ENCODE measurements at regions of chr7 and their contacts with region 1.

Region 1: GRCh38 chr7:85829817-85830432 is 643.1 kb upstream of the SEMA3D start:
- H3K4me3 ChIP-seq: no peak overlapping the region
- H3K27ac ChIP-seq: no peak overlapping the region
- H3K4me1 ChIP-seq: no peaks in the 10 kb centered on the region
- CTCF ChIP-seq: no peak

Region 2: GRCh38 chr7:85030893-85031292 is 799.0 kb before region 1 on chr7:
- CTCF ChIA-PET with region 1: interaction called, 31 read pairs
- POLR2A ChIA-PET with region 1: no interaction called
- H3K4me3 ChIP-seq: no peak overlapping the region
- H3K27ac ChIP-seq: no peak overlapping the region
- H3K4me1 ChIP-seq: peaks cover 21% of the 10 kb centered on the region
- CTCF ChIP-seq: no peak

Region 3: DNA sequence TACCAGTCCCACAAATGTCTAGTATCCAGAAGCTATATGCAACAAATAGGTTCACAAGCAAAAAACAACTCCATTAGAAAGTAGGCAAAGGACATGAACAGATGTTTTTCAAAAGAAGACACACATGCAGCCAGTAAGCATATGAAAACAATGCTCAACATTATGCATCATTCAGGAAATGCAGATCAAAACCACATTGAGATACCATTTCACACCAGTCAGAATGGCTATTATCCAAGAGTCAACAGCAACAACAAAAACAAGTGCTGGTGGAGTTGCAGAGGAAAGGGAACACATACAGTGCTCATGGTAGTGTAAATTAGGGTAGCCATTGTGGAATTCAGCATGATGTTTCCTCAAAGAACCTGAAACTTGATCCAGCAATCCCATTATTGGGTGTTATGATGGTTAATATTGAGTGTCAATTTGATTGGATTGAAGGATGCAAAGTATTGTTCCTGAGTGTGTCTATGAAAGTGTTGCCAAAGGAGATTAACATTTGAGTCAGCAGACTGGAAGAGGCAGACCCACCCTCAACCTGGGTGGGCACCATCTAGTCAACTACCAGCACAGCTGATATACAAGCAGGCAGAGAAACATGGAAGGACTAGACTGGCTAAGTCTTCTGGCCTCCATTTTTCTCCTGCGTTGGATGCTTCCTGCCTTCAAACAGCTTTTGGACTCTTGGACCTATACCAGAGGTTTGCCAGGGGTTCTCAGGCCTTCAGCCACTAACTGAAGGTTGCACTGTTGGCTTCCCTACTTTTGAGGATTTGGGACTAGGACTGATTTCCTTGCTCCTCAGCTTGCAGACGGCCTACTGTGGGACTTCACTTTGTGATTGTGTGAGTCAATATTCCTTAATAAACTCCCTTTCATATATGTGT is 424.7 kb before region 1 on chr7:
- CTCF ChIA-PET with region 1: no interaction called
- POLR2A ChIA-PET with region 1: no interaction called
- H3K4me3 ChIP-seq: no peak overlapping the region
- H3K27ac ChIP-seq: no peak overlapping the region
- H3K4me1 ChIP-seq: no peaks in the 10 kb centered on the region
- CTCF ChIP-seq: no peak

Region 4: DNA sequence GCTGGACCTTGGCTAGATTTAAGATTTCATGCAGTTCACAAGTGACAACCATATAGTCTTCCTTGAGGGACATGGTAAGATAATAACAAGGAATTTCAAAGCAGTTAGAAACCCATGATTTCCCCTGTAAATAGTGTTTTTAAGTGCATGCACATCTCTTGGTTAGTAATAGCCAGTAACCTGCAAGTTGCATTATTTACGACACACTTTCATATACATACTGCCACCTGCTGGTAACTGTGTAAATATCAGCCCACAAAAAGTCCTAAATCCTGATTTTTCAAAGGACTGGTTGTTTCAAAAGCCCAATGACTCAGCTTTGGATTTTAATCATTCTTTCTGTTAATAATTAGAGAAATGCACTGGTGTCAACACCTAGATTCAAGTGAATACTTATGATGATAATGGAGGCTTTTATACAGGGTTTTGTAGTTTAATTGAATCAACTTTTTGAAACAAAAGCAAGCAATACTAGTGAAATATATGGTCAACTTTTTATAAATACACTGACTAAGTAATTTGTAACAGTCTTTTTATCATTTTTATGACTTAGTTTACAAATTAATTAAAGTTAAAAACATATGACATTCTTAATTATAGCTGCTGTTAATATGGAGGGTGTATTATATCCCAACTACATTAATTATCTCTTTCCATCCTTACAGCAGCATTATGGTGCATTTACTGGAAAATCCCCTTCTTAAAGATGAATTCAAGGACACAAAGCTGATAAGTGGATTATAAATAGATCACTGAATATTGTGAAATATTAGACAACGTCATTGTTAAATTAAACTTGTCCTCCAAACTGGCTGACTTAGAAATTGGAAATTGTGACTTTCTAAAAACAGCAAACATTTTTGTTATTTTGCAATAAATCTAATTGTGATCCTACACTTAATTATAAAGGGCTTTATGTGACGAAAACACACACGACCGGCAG is 275.4 kb before region 1 on chr7:
- CTCF ChIA-PET with region 1: interaction called, 11 read pairs
- POLR2A ChIA-PET with region 1: no interaction called
- H3K4me3 ChIP-seq: no peak overlapping the region
- H3K27ac ChIP-seq: no peak overlapping the region
- H3K4me1 ChIP-seq: no peaks in the 10 kb centered on the region
- CTCF ChIP-seq: no peak

Region 5: GRCh38 chr7:85840554-85840953 is 10.6 kb after region 1 on chr7:
- CTCF ChIA-PET with region 1: interaction called, 19 read pairs
- POLR2A ChIA-PET with region 1: no interaction called
- H3K4me3 ChIP-seq: no peak overlapping the region
- H3K27ac ChIP-seq: no peak overlapping the region
- H3K4me1 ChIP-seq: no peaks in the 10 kb centered on the region
- CTCF ChIP-seq: no peak

Region 6: GRCh38 chr7:85851571-85852193 is 21.8 kb after region 1 on chr7:
- CTCF ChIA-PET with region 1: interaction called, 15 read pairs
- POLR2A ChIA-PET with region 1: no interaction called
- H3K4me3 ChIP-seq: no peak overlapping the region
- H3K27ac ChIP-seq: no peak overlapping the region
- H3K4me1 ChIP-seq: no peaks in the 10 kb centered on the region
- CTCF ChIP-seq: no peak

Region 7: DNA sequence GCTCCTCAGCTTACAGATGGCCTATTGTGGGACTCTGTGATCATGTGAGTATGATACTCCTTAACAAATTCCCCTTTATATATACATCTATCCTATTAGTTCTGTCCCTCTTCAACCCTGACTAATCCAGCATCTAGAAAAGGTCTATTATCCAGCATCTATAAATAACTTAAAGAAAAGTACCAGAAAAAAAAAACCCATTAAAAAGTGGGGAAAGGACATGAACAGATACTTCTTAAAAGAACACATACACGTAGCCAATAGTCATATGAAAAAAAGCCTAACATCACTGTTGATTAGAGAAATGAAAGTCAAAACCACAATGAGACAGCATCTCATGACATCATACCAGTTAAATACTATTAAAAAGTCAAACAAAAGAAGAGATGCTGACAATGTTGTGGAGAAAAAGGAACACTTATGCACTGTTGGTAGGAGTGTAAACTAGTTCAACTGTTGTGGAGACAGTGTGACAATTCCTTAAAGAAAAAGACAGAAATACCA is 264.3 kb after region 1 on chr7:
- CTCF ChIA-PET with region 1: no interaction called
- POLR2A ChIA-PET with region 1: no interaction called
- H3K4me3 ChIP-seq: no peak overlapping the region
- H3K27ac ChIP-seq: no peak overlapping the region
- H3K4me1 ChIP-seq: no peaks in the 10 kb centered on the region
- CTCF ChIP-seq: no peak